CD8-positive, alpha-beta memory T cell (primary cell): ENCODE measurements at regions of chr17 and their contacts with region 1.

Region 1: GRCh38 chr17:47831003-47831933 is at the starts of genes LRRC46 and MRPL10:
- DNase-seq: peak; percentile 87 to 94 (median 90)
- H3K4me3 ChIP-seq: peak within 1 kb of the TSS; percentile 98
- H3K4me3 Mint-ChIP-seq: peak within 1 kb of the TSS; percentile 92 to 99 (median 95)
- H3K27ac ChIP-seq: peak within 1 kb of the TSS; percentile 98
- H3K27ac Mint-ChIP-seq: peak within 1 kb of the TSS; percentile 95 to 100 (median 100)
- H3K4me1 ChIP-seq: peaks cover 59% of the 10 kb centered on the region
- H3K4me1 Mint-ChIP-seq: peaks cover 50 to 78% (median 59%) of the 10 kb centered on the region in 3 donors
- H3K27me3 ChIP-seq: no peaks in the 10 kb centered on the region
- H3K27me3 Mint-ChIP-seq: peaks cover 0 to 4% of the 10 kb centered on the region in 2 donors
- total RNA-seq, gene LRRC46: 0.49 to 0.83 TPM
- total RNA-seq, gene MRPL10: 67.0 to 67.7 TPM

Region 2: GRCh38 chr17:47649153-47649971 is 181.9 kb before region 1 on chr17 and contains the start of gene KPNB1:
- CTCF ChIA-PET with region 1: no interaction called
- POLR2A ChIA-PET with region 1: interaction called, 16 read pairs
- DNase-seq: peak; percentile 98 to 99 (median 98)
- H3K4me3 ChIP-seq: peak within 1 kb of the TSS; percentile 84
- H3K4me3 Mint-ChIP-seq: peak within 1 kb of the TSS; percentile 91 to 100 (median 98)
- H3K27ac ChIP-seq: peak within 1 kb of the TSS; percentile 85
- H3K27ac Mint-ChIP-seq: peak within 1 kb of the TSS; percentile 92 to 100 (median 98)
- H3K4me1 ChIP-seq: peaks cover 49% of the 10 kb centered on the region
- H3K4me1 Mint-ChIP-seq: peaks cover 39 to 65% (median 53%) of the 10 kb centered on the region in 3 donors
- H3K27me3 ChIP-seq: no peaks in the 10 kb centered on the region
- H3K27me3 Mint-ChIP-seq: peaks cover 0 to 5% of the 10 kb centered on the region in 2 donors
- total RNA-seq, gene KPNB1: 907 to 915 TPM